Naive thymus-derived CD4-positive, alpha-beta T cell (primary cell): ENCODE measurements at regions of chr10 and their contacts with region 1.

Region 1: GRCh38 chr10:13160934-13161856 is at the start of gene MCM10:
- DNase-seq: peak; percentile 86 to 99 (median 96)
- ATAC-seq: peak; percentile 100
- H3K4me3 ChIP-seq: peak within 1 kb of the TSS; percentile 47
- H3K4me3 Mint-ChIP-seq: peak within 1 kb of the TSS; percentile 64 to 93 (median 88)
- H3K27ac ChIP-seq: no peak within 1 kb of the TSS
- H3K27ac Mint-ChIP-seq: peak within 1 kb of the TSS; percentile 44 to 89 (median 74)
- H3K4me1 ChIP-seq: peaks cover 6 to 10% of the 10 kb centered on the region in 2 donors
- H3K4me1 Mint-ChIP-seq: peaks cover 3 to 38% (median 19%) of the 10 kb centered on the region in 7 donors
- H3K27me3 ChIP-seq: no peaks in the 10 kb centered on the region
- H3K27me3 Mint-ChIP-seq: peaks cover 0 to 2% (median 0%) of the 10 kb centered on the region in 5 donors
- total RNA-seq, gene MCM10: 0.08 to 41.8 (median 0.42) TPM

Region 2: GRCh38 chr10:13105184-13105583 is 56.0 kb before region 1 on chr10:
- CTCF ChIA-PET with region 1: no interaction called
- POLR2A ChIA-PET with region 1: no interaction called
- intact Hi-C with region 1: loop called in 1 of 2 experiments (anchors 2 kb)
- DNase-seq: no peak
- ATAC-seq: no peak
- H3K4me3 ChIP-seq: no peak overlapping the region
- H3K4me3 Mint-ChIP-seq: peak overlapping the region in 3 of 10 donors; percentile 18 to 58 (median 30)
- H3K27ac ChIP-seq: peak overlapping the region; percentile 26
- H3K27ac Mint-ChIP-seq: peak overlapping the region; percentile 33 to 95 (median 87)
- H3K4me1 ChIP-seq: peaks cover 45 to 63% of the 10 kb centered on the region in 2 donors
- H3K4me1 Mint-ChIP-seq: peaks cover 49 to 86% (median 77%) of the 10 kb centered on the region in 7 donors
- H3K27me3 ChIP-seq: no peaks in the 10 kb centered on the region
- H3K27me3 Mint-ChIP-seq: no peaks in the 10 kb centered on the region

Region 3: GRCh38 chr10:13440185-13441061 is 279.2 kb after region 1 on chr10:
- CTCF ChIA-PET with region 1: interaction called, 3 read pairs
- POLR2A ChIA-PET with region 1: no interaction called
- intact Hi-C with region 1: loop called (anchors 1 kb)
- DNase-seq: peak; percentile 39 to 76 (median 67)
- ATAC-seq: peak; percentile 96
- H3K4me3 ChIP-seq: peak overlapping the region; percentile 56
- H3K4me3 Mint-ChIP-seq: peak overlapping the region; percentile 38 to 86 (median 76)
- H3K27ac ChIP-seq: no peak overlapping the region
- H3K27ac Mint-ChIP-seq: peak overlapping the region in 2 of 9 donors; percentile 32 to 37
- H3K4me1 ChIP-seq: peaks cover 9 to 11% of the 10 kb centered on the region in 2 donors
- H3K4me1 Mint-ChIP-seq: peaks cover 5 to 16% (median 14%) of the 10 kb centered on the region in 7 donors
- H3K27me3 ChIP-seq: peaks cover 0 to 9% of the 10 kb centered on the region in 2 donors
- H3K27me3 Mint-ChIP-seq: peaks cover 38 to 57% (median 48%) of the 10 kb centered on the region in 5 donors

Region 4: GRCh38 chr10:13536674-13537366 is 375.6 kb after region 1 on chr10:
- CTCF ChIA-PET with region 1: interaction called, 4 read pairs
- POLR2A ChIA-PET with region 1: no interaction called
- intact Hi-C with region 1: loop called in 1 of 2 experiments (anchors 2 kb)
- DNase-seq: peak in 1 of 9 donors; percentile 25
- ATAC-seq: peak; percentile 56
- H3K4me3 ChIP-seq: no peak overlapping the region
- H3K4me3 Mint-ChIP-seq: no peak overlapping the region
- H3K27ac ChIP-seq: no peak overlapping the region
- H3K27ac Mint-ChIP-seq: peak overlapping the region in 1 of 9 donors; percentile 26
- H3K4me1 ChIP-seq: no peaks in the 10 kb centered on the region
- H3K4me1 Mint-ChIP-seq: no peaks in the 10 kb centered on the region
- H3K27me3 ChIP-seq: no peaks in the 10 kb centered on the region
- H3K27me3 Mint-ChIP-seq: peaks cover 36 to 77% (median 63%) of the 10 kb centered on the region in 5 donors

Region 5: DNA sequence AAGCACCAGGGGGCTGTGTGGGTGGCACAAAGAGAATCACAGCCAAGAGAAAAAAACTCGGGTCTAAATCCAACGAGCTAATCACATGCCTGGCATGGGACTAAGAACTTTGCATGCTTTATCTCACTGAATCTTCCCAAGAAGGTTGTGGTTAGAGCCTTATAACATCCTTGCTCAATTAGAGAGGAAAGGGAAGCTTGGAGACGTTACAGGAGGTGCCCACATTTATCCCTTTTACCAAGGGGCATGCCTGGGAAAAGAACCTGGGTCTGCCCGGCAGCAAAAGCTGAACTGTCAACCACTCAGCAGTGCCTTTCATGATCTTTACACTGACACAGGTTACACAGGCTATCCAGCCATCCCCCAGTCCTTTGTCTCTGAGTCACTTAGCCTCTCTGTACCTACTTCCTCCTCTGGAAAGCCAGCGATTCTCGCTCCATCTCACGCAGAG is 615.7 kb after region 1 on chr10:
- CTCF ChIA-PET with region 1: no interaction called
- POLR2A ChIA-PET with region 1: no interaction called
- intact Hi-C with region 1: loop called in 1 of 2 experiments (anchors 2 kb)
- DNase-seq: no peak
- ATAC-seq: no peak
- H3K4me3 ChIP-seq: no peak overlapping the region
- H3K4me3 Mint-ChIP-seq: no peak overlapping the region
- H3K27ac ChIP-seq: no peak overlapping the region
- H3K27ac Mint-ChIP-seq: no peak overlapping the region
- H3K4me1 ChIP-seq: peaks cover 0 to 4% of the 10 kb centered on the region in 2 donors
- H3K4me1 Mint-ChIP-seq: peaks cover 0 to 6% (median 0%) of the 10 kb centered on the region in 7 donors
- H3K27me3 ChIP-seq: no peaks in the 10 kb centered on the region
- H3K27me3 Mint-ChIP-seq: peaks cover 8 to 18% (median 11%) of the 10 kb centered on the region in 5 donors

Region 6: DNA sequence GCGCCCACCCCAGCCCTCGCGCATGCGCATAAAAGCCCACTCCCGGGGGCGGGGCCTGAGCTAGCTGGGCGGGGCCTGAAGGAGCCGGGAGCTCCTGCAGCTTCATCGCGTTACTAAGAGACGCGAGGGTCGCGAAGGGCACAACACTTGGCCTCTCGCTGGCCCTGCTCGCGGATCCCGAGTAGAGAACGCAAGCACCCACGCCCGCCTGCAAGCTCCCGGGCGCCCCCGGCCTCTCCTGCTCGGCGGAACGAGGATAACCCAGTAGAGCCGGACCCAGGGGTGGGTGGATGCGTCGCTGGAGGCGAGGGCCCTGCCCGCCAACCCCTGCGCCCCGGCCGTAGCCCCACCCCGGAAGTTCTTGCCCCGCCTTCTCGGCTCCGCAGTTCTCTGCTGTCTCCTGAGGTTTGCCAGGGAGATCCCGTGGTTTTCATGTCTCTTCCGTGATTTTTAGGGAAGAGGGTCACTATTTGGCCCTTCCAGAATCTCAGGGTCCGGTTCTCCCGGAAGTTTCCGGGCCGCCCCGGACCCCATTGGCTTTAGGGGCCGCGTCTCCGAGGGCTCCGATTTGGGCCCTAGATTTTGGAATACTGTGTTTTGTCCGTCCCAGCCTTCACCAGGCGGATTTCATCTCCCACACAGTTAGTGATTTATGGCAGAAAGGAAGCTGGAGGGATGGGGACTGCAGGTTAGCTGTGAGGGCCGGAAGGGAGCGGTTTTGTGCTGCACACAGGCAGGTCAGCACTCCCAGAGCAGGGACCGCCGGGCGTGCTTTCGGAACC is 1798.3 kb after region 1 on chr10 and contains the start of gene MEIG1:
- CTCF ChIA-PET with region 1: no interaction called
- POLR2A ChIA-PET with region 1: no interaction called
- intact Hi-C with region 1: loop called in 1 of 2 experiments (anchors 2 kb)
- DNase-seq: peak; percentile 82 to 99 (median 90)
- ATAC-seq: peak; percentile 93
- H3K4me3 ChIP-seq: peak within 1 kb of the TSS; percentile 97
- H3K4me3 Mint-ChIP-seq: peak within 1 kb of the TSS; percentile 91 to 99 (median 96)
- H3K27ac ChIP-seq: peak within 1 kb of the TSS; percentile 81
- H3K27ac Mint-ChIP-seq: peak within 1 kb of the TSS; percentile 93 to 98 (median 96)
- H3K4me1 ChIP-seq: peaks cover 8 to 10% of the 10 kb centered on the region in 2 donors
- H3K4me1 Mint-ChIP-seq: peaks cover 6 to 42% (median 34%) of the 10 kb centered on the region in 7 donors
- H3K27me3 ChIP-seq: no peaks in the 10 kb centered on the region
- H3K27me3 Mint-ChIP-seq: no peaks in the 10 kb centered on the region
- total RNA-seq, gene MEIG1: 1.2 to 1.9 TPM in 2 of 5 experiments, not detected in the others